ENCODE measurements at regions of chr12 and their contacts with region 1.

Region 1: GRCh38 chr12:109612975-109613502 is 39.4 kb downstream of the MVK start:
- ATAC-seq: peak; percentile 15 to 51 (median 34)
- H3K4me3 ChIP-seq: no peak overlapping the region
- H3K27ac ChIP-seq: no peak overlapping the region
- H3K4me1 ChIP-seq: peaks cover 14 to 23% of the 10 kb centered on the region in 2 donors

Region 2: DNA sequence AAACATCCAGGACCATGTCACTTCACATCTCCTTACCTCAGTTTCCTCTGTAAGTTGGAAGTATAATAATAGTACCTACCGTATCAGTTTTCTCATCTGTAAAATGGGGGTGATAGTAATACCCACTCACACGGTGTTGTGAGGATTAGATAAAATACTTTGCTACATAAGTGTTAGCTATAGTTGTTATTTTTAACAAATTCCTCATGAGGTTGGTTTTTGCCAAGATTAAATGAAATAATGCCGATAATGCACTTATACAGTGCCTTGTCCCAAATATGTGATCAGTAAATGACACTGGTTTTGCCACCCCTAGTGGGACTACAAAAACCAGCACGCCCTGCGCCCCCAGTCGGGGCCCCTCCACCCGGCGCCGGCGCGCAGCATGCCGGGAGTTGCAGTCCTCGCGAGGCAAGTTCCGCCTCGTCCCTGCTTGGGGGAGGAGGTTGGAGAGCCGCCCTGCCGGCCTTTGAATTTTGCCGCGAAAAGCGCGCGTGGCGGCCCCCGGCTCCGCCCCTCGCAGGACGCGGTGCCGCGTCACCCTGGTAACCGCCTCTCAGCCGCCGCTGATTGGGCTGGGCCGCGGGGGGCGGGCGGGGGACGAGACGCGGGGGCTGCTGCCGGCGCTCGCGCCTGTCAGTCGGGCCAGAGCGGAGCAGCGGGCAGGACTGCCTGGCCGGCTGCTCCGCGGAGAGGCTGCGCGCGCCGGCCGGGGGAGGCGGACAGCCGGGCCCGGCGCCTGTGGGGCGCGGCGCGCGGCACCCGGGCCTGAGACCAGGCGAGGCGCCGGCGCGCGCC is 100.3 kb after region 1 on chr12 and contains the start of gene FAM222A:
- in situ Hi-C with region 1: loop called in 1 of 9 experiments (anchors 25 kb)
- ATAC-seq: peak; percentile 76 to 93 (median 81)
- H3K4me3 ChIP-seq: peak within 1 kb of the TSS; percentile 68 to 91 (median 77)
- H3K27ac ChIP-seq: peak within 1 kb of the TSS; percentile 77 to 78
- H3K4me1 ChIP-seq: peaks cover 26 to 32% of the 10 kb centered on the region in 2 donors
- total RNA-seq, gene FAM222A: 0.73 to 17.8 (median 8.1) TPM